ENCODE measurements at regions of chr5 and their contacts with region 1.

Region 1: DNA sequence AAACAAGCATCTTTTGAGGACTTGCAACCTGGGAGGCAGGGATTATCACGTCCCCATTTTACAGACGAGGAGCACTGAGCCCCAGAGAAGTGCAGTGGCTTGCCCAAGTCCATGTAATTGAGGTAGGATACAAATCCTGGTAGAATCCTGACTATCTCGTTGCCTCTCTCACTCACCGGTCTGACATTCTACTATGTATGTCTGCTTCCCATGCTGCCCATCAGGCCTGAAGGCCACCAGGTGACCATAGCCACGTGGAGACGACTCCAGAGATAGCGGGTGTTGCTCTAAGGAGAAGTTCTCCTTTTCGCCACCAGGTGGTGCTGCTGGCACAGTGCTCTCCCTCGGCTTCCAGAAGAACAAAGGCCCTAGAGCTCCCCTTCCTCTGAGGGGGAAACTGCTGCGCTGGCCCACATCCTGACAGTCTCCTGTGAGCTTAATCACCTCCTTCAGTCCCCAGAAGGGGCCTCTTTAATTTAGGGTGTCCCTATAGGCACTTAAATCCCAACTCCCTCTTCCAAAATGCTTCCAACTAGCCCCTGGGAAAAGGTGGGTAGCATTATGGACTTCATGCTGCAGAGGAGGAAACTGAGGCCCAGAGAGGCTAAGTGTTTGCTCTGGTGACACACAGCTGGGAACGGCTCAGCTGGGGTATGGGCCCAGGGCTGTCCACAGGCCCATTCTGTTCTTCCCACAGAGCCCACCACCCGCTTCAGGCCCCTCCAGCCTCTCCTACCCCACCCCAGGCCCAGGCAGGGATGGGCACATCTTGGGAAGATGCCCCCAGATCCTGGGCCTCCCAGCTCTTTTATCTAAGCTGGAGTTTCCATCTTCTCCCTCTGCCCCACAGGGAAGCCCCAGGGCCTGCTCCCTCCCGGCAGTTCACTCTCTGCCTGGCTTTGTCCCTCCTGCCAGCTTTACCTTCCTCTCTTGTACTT is 6.4 kb downstream of the SLC34A1 start:
- DNase-seq: peak; percentile 76 to 90 (median 83)
- H3K4me3 ChIP-seq: no peak overlapping the region
- H3K4me3 Mint-ChIP-seq: peak overlapping the region; percentile 41 to 90 (median 65)
- H3K27ac ChIP-seq: peak overlapping the region; percentile 49
- H3K27ac Mint-ChIP-seq: peak overlapping the region; percentile 75 to 99 (median 93)
- H3K4me1 ChIP-seq: peaks cover 39% of the 10 kb centered on the region
- H3K4me1 Mint-ChIP-seq: peaks cover 35 to 39% (median 36%) of the 10 kb centered on the region in 3 donors
- H3K27me3 ChIP-seq: no peaks in the 10 kb centered on the region
- H3K27me3 Mint-ChIP-seq: no peaks in the 10 kb centered on the region

Region 2: GRCh38 chr5:177241768-177242167 is 148.9 kb before region 1 on chr5:
- CTCF ChIA-PET with region 1: no interaction called
- POLR2A ChIA-PET with region 1: no interaction called
- DNase-seq: no peak
- H3K4me3 ChIP-seq: no peak overlapping the region
- H3K4me3 Mint-ChIP-seq: no peak overlapping the region
- H3K27ac ChIP-seq: no peak overlapping the region
- H3K27ac Mint-ChIP-seq: peak overlapping the region in 3 of 8 donors; percentile 36 to 66 (median 58)
- H3K4me1 ChIP-seq: no peaks in the 10 kb centered on the region
- H3K4me1 Mint-ChIP-seq: peaks cover 3 to 5% (median 4%) of the 10 kb centered on the region in 3 donors
- H3K27me3 ChIP-seq: no peaks in the 10 kb centered on the region
- H3K27me3 Mint-ChIP-seq: no peaks in the 10 kb centered on the region

Region 3: DNA sequence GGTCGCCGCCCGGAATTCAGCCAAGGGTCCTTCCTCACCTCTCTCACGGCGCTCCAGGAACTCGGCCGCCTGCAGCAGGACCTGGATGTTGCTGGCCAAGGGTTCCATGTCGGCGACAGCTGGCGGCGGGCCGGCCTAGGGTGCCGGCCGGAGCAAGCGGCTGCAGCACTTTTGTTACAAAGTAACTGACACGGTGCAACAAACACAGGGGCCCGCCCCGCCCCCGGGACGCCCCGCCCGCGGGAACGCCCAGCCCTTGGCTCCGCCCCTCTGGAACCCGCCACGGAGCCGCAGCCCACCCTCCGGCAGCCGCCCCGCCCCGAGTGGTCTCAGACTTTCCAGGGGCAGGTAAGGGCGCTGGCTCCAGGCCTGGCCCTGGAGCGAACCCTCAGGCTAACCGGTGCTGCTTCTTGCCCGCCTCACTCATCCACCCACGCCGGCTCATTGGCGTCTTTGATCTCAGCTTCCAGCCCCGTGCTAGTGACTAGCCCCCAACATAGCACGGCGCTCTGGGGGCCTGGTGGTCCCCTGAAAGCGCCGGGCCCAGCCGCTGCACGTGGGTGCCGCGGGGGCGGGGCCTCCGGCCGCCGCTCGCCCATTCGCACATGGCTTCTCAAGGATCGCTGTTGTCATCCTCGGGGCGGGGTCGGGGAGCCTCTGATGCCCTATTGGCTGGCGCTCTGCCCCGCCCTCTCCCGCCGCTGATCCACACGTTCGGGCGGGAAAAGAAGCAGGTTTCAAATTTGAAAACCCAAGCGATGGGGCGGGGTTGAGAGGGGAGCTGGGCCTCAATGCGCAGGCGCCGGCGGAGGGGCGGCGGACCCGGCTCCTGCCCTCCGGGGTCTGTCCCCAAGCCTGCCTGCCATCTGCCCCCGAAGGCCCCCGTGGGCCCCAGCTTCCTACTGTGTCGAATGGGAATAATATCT is 78.6 kb before region 1 on chr5 and contains the start of gene MXD3:
- CTCF ChIA-PET with region 1: interaction called, 28 read pairs
- POLR2A ChIA-PET with region 1: no interaction called
- DNase-seq: peak; percentile 92 to 96 (median 94)
- H3K4me3 ChIP-seq: peak within 1 kb of the TSS; percentile 70
- H3K4me3 Mint-ChIP-seq: peak within 1 kb of the TSS; percentile 70 to 92 (median 78)
- H3K27ac ChIP-seq: peak within 1 kb of the TSS; percentile 51
- H3K27ac Mint-ChIP-seq: peak within 1 kb of the TSS; percentile 32 to 84 (median 57)
- H3K4me1 ChIP-seq: peaks cover 20% of the 10 kb centered on the region
- H3K4me1 Mint-ChIP-seq: peaks cover 29 to 43% (median 30%) of the 10 kb centered on the region in 3 donors
- H3K27me3 ChIP-seq: no peaks in the 10 kb centered on the region
- H3K27me3 Mint-ChIP-seq: peaks cover 0 to 2% of the 10 kb centered on the region in 2 donors
- total RNA-seq, gene MXD3: 10.2 to 13.4 TPM

Region 4: GRCh38 chr5:177351385-177352329 is 39.0 kb before region 1 on chr5 and contains the start of gene LMAN2:
- CTCF ChIA-PET with region 1: interaction called, 15 read pairs
- POLR2A ChIA-PET with region 1: interaction called, 6 read pairs
- DNase-seq: peak; percentile 85 to 94 (median 91)
- H3K4me3 ChIP-seq: peak within 1 kb of the TSS; percentile 93
- H3K4me3 Mint-ChIP-seq: peak within 1 kb of the TSS; percentile 97 to 100 (median 98)
- H3K27ac ChIP-seq: peak within 1 kb of the TSS; percentile 96
- H3K27ac Mint-ChIP-seq: peak within 1 kb of the TSS; percentile 94 to 100 (median 100)
- H3K4me1 ChIP-seq: peaks cover 57% of the 10 kb centered on the region
- H3K4me1 Mint-ChIP-seq: peaks cover 61 to 76% (median 72%) of the 10 kb centered on the region in 3 donors
- H3K27me3 ChIP-seq: no peaks in the 10 kb centered on the region
- H3K27me3 Mint-ChIP-seq: no peaks in the 10 kb centered on the region
- total RNA-seq, gene LMAN2: 112 to 126 TPM

Region 5: DNA sequence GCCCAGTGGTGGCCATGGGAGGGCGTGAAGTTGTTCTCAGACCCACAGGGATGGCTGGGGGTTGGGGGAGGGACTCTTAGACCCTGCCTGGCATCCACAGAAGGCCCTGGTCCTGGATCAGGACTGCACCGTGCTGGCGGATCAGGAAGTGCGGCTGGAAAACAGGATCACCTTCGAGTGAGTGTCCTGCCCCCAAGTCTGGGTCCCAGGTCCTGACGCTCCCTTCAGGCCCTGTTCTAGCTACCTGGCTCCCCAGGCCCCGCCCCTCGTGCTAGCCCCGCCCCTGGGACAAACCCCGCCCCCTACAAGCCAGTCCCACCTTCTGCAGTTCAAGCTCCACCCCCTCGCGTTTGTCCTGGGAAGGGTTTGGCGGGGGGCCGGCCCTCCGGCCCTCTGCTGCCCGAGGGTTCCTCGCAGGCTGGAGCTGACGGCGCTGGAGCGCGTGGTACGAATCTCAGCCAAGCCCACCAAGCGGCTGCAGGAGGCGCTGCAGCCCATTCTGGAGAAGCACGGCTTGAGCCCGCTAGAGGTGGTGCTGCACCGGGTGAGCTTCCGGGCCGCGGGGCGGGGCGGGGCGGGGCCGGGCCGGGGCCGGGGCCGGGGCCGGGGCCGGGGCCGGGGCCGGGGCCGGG is 20.0 kb before region 1 on chr5:
- CTCF ChIA-PET with region 1: interaction called, 136 read pairs
- POLR2A ChIA-PET with region 1: interaction called, 6 read pairs
- DNase-seq: peak; percentile 36 to 78 (median 50)
- H3K4me3 ChIP-seq: no peak overlapping the region
- H3K4me3 Mint-ChIP-seq: peak overlapping the region in 2 of 7 donors; percentile 43 to 64
- H3K27ac ChIP-seq: no peak overlapping the region
- H3K27ac Mint-ChIP-seq: peak overlapping the region in 3 of 8 donors; percentile 29 to 81 (median 51)
- H3K4me1 ChIP-seq: peaks cover 66% of the 10 kb centered on the region
- H3K4me1 Mint-ChIP-seq: peaks cover 57 to 77% (median 64%) of the 10 kb centered on the region in 3 donors
- H3K27me3 ChIP-seq: no peaks in the 10 kb centered on the region
- H3K27me3 Mint-ChIP-seq: peaks cover 0 to 1% of the 10 kb centered on the region in 2 donors

Region 6: DNA sequence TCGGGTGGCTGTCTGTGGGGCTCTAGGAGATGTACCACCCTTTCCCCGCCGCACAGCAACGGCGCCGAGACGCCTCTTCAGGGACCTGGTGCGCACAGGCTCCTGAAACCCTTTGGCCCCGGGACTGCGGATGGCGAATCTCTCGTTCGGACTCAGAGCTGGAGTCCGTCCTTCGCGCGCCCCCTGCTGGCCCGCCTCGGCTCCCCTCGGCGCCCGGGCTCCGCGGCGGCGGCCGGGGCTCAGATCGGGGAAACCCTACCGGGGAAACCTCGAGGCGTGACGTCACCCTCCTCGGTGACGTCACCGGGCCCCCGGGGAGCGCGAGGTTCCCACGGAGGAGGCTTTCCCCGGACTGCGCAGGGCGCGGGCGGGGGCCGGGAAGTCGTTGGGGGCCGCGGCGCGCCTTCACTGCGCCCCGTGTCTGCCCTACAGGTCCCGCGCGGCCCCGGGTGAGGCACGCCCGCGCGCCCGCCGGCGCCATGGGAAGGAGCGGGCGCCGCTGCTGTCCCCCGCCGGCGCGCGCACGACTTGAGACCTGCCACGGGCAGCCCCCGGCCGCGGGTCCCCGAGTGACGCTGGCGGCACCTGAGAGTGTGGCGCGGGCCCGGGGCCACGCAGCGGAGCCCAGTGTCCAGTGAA is 63.9 kb after region 1 on chr5:
- CTCF ChIA-PET with region 1: interaction called, 281 read pairs
- POLR2A ChIA-PET with region 1: interaction called, 48 read pairs
- DNase-seq: peak; percentile 90 to 97 (median 95)
- H3K4me3 ChIP-seq: peak overlapping the region; percentile 59
- H3K4me3 Mint-ChIP-seq: peak overlapping the region; percentile 46 to 93 (median 89)
- H3K27ac ChIP-seq: peak overlapping the region; percentile 87
- H3K27ac Mint-ChIP-seq: peak overlapping the region in 7 of 8 donors; percentile 66 to 97 (median 85)
- H3K4me1 ChIP-seq: peaks cover 20% of the 10 kb centered on the region
- H3K4me1 Mint-ChIP-seq: peaks cover 19 to 32% (median 19%) of the 10 kb centered on the region in 3 donors
- H3K27me3 ChIP-seq: no peaks in the 10 kb centered on the region
- H3K27me3 Mint-ChIP-seq: peaks cover 0 to 4% of the 10 kb centered on the region in 2 donors

Region 7: DNA sequence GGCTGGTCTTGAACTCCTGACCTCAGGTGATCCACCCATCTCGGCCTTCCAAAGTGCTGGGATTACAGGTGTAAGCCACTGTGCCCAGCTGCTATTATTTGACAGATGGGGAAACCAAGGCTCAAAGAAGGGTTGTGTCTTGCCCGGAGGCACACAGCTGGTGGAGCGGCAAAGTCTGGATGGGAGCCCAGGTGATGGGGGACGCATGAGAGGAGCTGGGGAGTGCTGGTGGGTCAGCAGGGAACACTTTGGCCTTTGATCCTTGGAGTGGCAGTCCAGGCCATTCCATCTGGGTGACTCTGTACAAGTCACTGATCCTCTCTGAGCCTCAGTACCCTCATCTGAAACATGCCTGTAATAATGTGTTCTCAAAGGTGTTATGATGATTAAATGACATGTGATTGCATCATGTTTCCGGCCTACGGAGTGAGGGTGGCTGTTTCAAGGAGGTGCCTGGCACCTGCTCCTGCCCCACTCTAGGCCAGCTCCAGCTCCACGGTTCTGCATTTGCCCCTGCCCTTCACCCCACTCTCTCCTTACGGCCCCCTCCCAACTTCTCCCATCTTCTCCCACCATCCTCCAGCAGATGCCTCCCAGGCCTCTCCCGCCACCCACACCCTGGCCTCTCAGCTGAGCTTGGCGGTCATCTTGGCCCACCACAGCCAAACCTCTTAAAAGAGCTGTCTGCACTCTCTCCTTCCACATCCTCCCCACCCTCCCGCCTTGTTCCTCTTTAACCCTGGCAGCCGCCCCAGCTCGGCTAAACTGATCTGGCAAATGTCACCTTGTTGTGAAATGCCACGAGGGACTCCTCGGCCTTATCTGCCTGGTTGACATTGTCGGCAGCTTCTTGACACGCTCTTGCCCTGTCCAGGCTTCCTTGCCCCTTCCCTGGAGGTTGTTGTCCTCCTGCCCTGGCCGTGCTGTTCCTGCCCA is 88.3 kb after region 1 on chr5:
- CTCF ChIA-PET with region 1: interaction called, 11 read pairs
- POLR2A ChIA-PET with region 1: no interaction called
- DNase-seq: peak in 1 of 5 donors; percentile 50
- H3K4me3 ChIP-seq: no peak overlapping the region
- H3K4me3 Mint-ChIP-seq: peak overlapping the region in 3 of 7 donors; percentile 27 to 55 (median 52)
- H3K27ac ChIP-seq: no peak overlapping the region
- H3K27ac Mint-ChIP-seq: peak overlapping the region; percentile 74 to 93 (median 86)
- H3K4me1 ChIP-seq: peaks cover 23% of the 10 kb centered on the region
- H3K4me1 Mint-ChIP-seq: peaks cover 30 to 44% (median 30%) of the 10 kb centered on the region in 3 donors
- H3K27me3 ChIP-seq: no peaks in the 10 kb centered on the region
- H3K27me3 Mint-ChIP-seq: no peaks in the 10 kb centered on the region

Region 8: DNA sequence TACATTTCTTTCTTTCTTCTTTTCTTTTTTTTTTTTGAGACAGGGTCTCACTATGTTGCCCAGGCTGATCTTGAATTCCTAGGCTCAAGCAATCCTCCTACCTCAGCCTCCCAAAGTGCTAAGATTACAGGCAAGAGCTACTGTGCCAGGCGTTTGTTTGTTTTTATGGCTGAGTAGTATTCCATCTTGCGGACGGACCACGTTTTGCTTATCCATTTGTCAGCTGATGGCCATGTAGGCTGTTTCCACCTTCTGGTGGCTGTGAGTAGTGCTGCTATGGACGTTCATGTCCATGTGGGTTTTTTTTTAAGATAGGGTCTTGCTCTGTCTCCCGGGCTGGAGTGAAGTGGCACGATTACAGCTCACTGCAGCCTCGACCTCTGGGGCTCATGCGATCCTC is 116.5 kb after region 1 on chr5:
- CTCF ChIA-PET with region 1: interaction called, 101 read pairs
- POLR2A ChIA-PET with region 1: no interaction called
- DNase-seq: no peak
- H3K4me3 ChIP-seq: no peak overlapping the region
- H3K4me3 Mint-ChIP-seq: no peak overlapping the region
- H3K27ac ChIP-seq: no peak overlapping the region
- H3K27ac Mint-ChIP-seq: peak overlapping the region in 3 of 8 donors; percentile 2 to 37 (median 9)
- H3K4me1 ChIP-seq: no peaks in the 10 kb centered on the region
- H3K4me1 Mint-ChIP-seq: peaks cover 0 to 5% (median 0%) of the 10 kb centered on the region in 3 donors
- H3K27me3 ChIP-seq: no peaks in the 10 kb centered on the region
- H3K27me3 Mint-ChIP-seq: no peaks in the 10 kb centered on the region

Region 9: DNA sequence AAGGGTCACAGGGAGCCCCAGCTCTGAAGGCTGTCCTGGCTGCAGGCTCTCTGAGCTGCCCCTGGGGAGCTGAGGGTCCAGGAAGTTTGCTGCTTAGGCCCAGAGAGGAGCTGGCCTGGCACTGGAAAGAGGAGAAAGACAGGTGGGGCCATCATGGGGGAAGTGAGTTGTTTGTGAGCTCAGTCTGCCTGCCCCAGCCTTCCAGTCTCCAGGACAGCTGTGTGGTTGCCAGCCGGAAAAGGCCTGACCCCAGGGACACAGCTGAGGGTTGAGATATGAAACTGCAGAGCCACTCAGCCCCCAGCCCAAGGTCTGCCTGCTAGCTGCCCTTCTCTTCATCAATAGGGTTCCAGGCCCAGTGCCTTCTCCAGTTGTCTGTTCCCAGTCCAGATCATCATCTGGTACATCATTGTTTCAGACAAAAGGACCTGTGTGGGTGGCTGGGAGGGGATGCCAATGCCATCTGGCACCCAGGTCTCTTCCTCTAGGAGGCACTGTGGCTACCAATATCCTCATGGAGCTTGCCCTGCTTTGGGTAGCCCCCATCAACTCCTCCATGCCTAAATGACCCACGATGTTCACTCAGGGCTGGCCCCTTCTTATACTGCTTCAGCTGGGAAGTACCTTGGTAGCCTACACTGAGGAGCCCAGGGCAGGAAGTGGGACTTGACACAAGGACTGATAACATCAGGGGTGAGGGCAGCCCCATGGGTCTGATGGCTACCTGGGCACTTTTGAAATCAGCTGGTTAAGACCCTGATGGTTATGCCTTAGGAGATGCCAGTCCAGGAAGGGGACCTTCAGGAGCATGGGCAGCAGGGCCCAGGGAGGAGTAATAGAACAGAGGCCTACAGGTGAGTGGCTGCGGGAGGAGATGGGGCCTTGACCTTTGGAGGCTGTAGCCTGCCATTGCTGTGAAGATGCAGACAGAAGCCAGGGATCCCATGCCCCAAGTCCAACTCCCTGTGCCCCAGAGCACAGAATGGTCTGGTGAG is 130.6 kb after region 1 on chr5:
- CTCF ChIA-PET with region 1: no interaction called
- POLR2A ChIA-PET with region 1: no interaction called
- DNase-seq: peak in 1 of 5 donors; percentile 34
- H3K4me3 ChIP-seq: no peak overlapping the region
- H3K4me3 Mint-ChIP-seq: peak overlapping the region in 4 of 7 donors; percentile 12 to 60 (median 22)
- H3K27ac ChIP-seq: no peak overlapping the region
- H3K27ac Mint-ChIP-seq: peak overlapping the region; percentile 12 to 85 (median 70)
- H3K4me1 ChIP-seq: peaks cover 20% of the 10 kb centered on the region
- H3K4me1 Mint-ChIP-seq: peaks cover 31 to 47% (median 44%) of the 10 kb centered on the region in 3 donors
- H3K27me3 ChIP-seq: no peaks in the 10 kb centered on the region
- H3K27me3 Mint-ChIP-seq: peaks cover 0 to 2% of the 10 kb centered on the region in 2 donors

Measured in CD8-positive, alpha-beta memory T cell (primary cell).